MCF 10A (cell line): ENCODE measurements at regions of chr13 and their contacts with region 1.

Region 1: GRCh38 chr13:24557081-24557480 is 44.5 kb upstream of the PARP4 start:
- DNase-seq: no peak
- H3K4me3 Mint-ChIP-seq: no peak overlapping the region
- H3K27ac Mint-ChIP-seq: no peak overlapping the region
- H3K4me1 Mint-ChIP-seq: no peaks in the 10 kb centered on the region
- H3K27me3 Mint-ChIP-seq: peaks cover 33% of the 10 kb centered on the region
- CTCF ChIP-seq: no peak

Region 2: GRCh38 chr13:24328145-24328544 is 228.9 kb before region 1 on chr13:
- CTCF ChIA-PET with region 1: interaction called, 3 read pairs
- POLR2A ChIA-PET with region 1: no interaction called
- intact Hi-C with region 1: loop called (anchors 10 kb)
- DNase-seq: no peak
- H3K4me3 Mint-ChIP-seq: no peak overlapping the region
- H3K27ac Mint-ChIP-seq: no peak overlapping the region
- H3K4me1 Mint-ChIP-seq: no peaks in the 10 kb centered on the region
- H3K27me3 Mint-ChIP-seq: peaks cover 14% of the 10 kb centered on the region
- CTCF ChIP-seq: no peak

Region 3: GRCh38 chr13:24512197-24512907 is 44.7 kb before region 1 on chr13 and contains the start of gene PARP4:
- CTCF ChIA-PET with region 1: interaction called, 4 read pairs
- POLR2A ChIA-PET with region 1: interaction called, 12 read pairs
- intact Hi-C with region 1: loop called (anchors 2 kb)
- DNase-seq: peak; percentile 94
- H3K4me3 Mint-ChIP-seq: peak within 1 kb of the TSS; percentile 88
- H3K27ac Mint-ChIP-seq: peak within 1 kb of the TSS; percentile 90
- H3K4me1 Mint-ChIP-seq: peaks cover 16% of the 10 kb centered on the region
- H3K27me3 Mint-ChIP-seq: no peaks in the 10 kb centered on the region
- CTCF ChIP-seq: no peak
- total RNA-seq, gene PARP4: 30.9 and 34.3 TPM in 2 replicates

Region 4: GRCh38 chr13:24528816-24529398 is 28.2 kb before region 1 on chr13:
- CTCF ChIA-PET with region 1: no interaction called
- POLR2A ChIA-PET with region 1: no interaction called
- intact Hi-C with region 1: no loop called
- DNase-seq: no peak
- H3K4me3 Mint-ChIP-seq: no peak overlapping the region
- H3K27ac Mint-ChIP-seq: no peak overlapping the region
- H3K4me1 Mint-ChIP-seq: no peaks in the 10 kb centered on the region
- H3K27me3 Mint-ChIP-seq: peaks cover 32% of the 10 kb centered on the region
- CTCF ChIP-seq: no peak

Region 5: DNA sequence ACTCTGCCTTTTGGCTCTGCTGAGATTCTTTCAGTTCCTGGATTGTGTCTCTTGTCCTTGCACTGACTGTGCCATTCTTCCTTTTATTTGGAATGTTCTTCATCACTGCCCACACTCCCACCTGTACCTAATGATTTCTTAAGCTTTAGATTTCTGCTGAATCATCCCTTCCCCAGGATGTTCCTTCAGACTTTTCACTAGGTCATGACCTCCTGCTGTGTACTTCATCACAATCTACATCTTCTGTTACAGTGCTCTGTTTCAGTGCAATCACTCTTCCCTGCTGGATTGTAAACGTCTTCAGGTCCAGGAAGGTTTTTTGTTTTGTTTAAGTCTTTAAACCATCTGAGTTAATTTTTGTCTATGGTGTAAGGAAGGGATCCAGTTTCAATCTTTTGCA is 1095.7 kb after region 1 on chr13:
- CTCF ChIA-PET with region 1: no interaction called
- POLR2A ChIA-PET with region 1: no interaction called
- intact Hi-C with region 1: no loop called
- DNase-seq: peak; percentile 42
- H3K4me3 Mint-ChIP-seq: no peak overlapping the region
- H3K27ac Mint-ChIP-seq: peak overlapping the region; percentile 41
- H3K4me1 Mint-ChIP-seq: peaks cover 25% of the 10 kb centered on the region
- H3K27me3 Mint-ChIP-seq: no peaks in the 10 kb centered on the region
- CTCF ChIP-seq: no peak